ENCODE measurements at regions of chr17 and their contacts with region 1.

Region 1: DNA sequence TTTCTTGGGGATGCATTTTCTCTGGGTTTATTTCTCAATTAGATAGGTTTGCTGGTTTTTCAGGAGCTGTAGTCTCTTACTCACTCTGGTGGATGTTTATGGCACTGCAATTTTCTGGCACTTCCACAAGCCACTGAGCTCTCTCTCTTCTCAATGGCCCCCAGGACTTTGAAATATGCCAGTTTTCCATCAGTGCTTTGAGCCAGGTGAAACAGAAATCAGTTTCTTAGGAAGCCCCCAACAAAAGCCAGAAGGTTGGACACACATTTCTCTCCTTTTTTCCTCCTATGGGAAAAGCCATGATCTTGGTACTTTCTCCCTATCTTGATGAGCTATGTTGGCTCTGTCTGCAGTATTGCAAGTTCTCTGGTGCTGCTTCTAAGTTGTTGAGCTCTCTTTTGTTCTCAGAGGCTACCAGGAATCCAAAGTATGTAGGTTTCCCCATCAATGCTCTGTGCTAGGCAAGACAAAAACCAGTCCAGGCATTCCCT is 90.7 kb upstream of the SMIM36 start:
- DNase-seq: peak in 5 of 14 experiments; percentile 5 to 65 (median 54)
- ATAC-seq: peak; percentile 37
- H3K4me3 ChIP-seq: no peak overlapping the region
- H3K4me3 Mint-ChIP-seq: no peak overlapping the region
- H3K27ac ChIP-seq: no peak overlapping the region
- H3K27ac Mint-ChIP-seq: no peak overlapping the region
- H3K4me1 ChIP-seq: no peaks in the 10 kb centered on the region
- H3K4me1 Mint-ChIP-seq: no peaks in the 10 kb centered on the region
- H3K27me3 ChIP-seq: peaks cover 0 to 6% of the 10 kb centered on the region in 2 experiments
- H3K27me3 Mint-ChIP-seq: peaks cover 33% of the 10 kb centered on the region
- CTCF ChIP-seq: peak; percentile 18

Region 2: DNA sequence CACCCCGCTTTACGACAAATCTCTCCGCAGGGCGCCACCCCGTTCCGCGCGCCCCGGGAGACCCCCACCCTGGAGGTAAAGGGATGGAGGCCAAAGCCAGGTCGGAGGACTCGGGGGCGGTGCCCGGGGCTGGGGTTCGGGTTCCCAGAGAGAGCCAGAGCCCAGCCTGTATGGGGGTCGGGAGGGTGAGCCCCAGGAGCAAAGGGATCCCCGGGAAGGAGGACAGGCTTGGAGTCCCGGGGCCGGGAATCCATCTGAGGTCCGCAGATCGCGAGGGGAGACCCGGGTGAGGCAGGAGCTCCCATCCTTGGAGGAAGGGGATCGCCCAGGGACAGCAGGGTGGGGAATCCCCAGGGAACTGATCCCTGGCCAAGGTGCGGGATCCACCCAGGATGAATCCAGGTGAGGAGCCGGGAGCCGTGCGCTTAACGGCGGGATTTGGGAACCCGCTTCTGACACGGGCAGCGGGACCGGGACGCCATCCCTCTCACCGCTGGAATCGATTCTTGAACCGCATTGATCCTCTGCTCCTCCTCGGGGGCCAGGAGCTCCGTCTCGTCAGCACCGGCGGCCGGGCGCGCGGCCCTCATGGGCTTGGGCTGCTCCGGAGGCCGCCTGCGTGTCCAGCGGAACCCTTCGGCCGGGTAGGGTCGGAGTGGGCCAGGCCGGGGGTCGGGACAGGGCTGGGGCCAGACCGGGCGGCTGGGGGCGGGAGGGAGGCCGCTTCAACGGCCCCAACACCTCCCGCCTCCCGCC is 180.6 kb before region 1 on chr17 and contains the start of gene MMD:
- CTCF ChIA-PET with region 1: no interaction called
- POLR2A ChIA-PET with region 1: no interaction called
- intact Hi-C with region 1: no loop called
- DNase-seq: peak in 3 of 14 experiments; percentile 1 to 37 (median 13)
- ATAC-seq: no peak
- H3K4me3 ChIP-seq: peak within 1 kb of the TSS; percentile 99
- H3K4me3 Mint-ChIP-seq: peak within 1 kb of the TSS; percentile 95
- H3K27ac ChIP-seq: peak within 1 kb of the TSS; percentile 65
- H3K27ac Mint-ChIP-seq: peak within 1 kb of the TSS; percentile 91
- H3K4me1 ChIP-seq: peaks cover 21% of the 10 kb centered on the region
- H3K4me1 Mint-ChIP-seq: peaks cover 30% of the 10 kb centered on the region
- H3K27me3 ChIP-seq: peaks cover 6 to 7% of the 10 kb centered on the region in 2 experiments
- H3K27me3 Mint-ChIP-seq: peaks cover 32% of the 10 kb centered on the region
- CTCF ChIP-seq: no peak
- total RNA-seq, gene MMD: 15.3 to 17.4 TPM

Region 3: DNA sequence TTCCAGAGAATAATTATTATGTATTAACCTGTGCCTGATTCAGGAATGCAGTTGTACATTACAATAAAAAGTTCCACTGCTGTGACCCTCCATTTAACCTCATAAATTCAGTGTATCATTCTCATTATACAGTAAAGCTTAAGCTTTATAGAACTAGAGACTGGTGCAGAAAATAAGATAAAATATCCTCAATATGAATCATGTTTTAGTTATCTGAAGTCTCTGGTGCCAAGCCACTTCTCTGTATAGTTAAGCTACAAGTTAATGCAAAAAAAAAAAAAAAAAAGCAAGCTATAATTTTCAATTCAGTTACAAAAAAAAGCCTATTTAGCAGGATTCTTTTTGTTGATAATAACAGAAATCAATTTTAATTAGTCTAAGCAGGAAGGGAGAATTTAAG is 68.3 kb before region 1 on chr17:
- CTCF ChIA-PET with region 1: interaction called, 14 read pairs
- POLR2A ChIA-PET with region 1: no interaction called
- intact Hi-C with region 1: no loop called
- DNase-seq: no peak
- ATAC-seq: no peak
- H3K4me3 ChIP-seq: no peak overlapping the region
- H3K4me3 Mint-ChIP-seq: no peak overlapping the region
- H3K27ac ChIP-seq: no peak overlapping the region
- H3K27ac Mint-ChIP-seq: no peak overlapping the region
- H3K4me1 ChIP-seq: no peaks in the 10 kb centered on the region
- H3K4me1 Mint-ChIP-seq: no peaks in the 10 kb centered on the region
- H3K27me3 ChIP-seq: no peaks in the 10 kb centered on the region
- H3K27me3 Mint-ChIP-seq: peaks cover 4% of the 10 kb centered on the region
- CTCF ChIP-seq: no peak

Region 4: DNA sequence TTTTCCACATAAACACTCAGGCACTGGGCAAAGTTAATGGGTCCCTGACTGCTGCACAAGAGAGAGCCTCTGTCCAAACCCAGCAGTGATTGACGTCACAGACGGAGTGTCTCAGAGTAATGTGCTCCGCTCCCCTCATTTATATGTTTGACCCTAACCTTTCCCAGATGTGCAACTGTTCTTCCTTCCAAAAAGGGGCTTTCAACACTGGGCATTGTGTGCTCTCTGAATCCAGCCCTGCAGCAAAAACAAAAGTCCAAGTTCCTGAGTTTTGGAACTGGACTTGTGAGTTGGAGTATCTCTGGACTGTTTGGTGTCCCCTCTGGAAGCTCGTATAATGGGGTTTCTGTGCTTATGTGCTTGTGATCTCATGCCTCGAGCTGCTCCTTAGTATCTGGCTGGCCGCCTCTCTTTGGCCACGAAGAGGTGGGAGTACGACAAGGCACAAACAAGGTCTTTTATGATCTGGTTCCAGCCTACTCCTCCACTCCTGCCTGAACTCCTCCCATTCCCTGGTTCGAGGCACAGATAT is 14.2 kb before region 1 on chr17:
- CTCF ChIA-PET with region 1: interaction called, 14 read pairs
- POLR2A ChIA-PET with region 1: interaction called, 3 read pairs
- intact Hi-C with region 1: no loop called
- DNase-seq: no peak
- ATAC-seq: no peak
- H3K4me3 ChIP-seq: no peak overlapping the region
- H3K4me3 Mint-ChIP-seq: no peak overlapping the region
- H3K27ac ChIP-seq: no peak overlapping the region
- H3K27ac Mint-ChIP-seq: no peak overlapping the region
- H3K4me1 ChIP-seq: peaks cover 3% of the 10 kb centered on the region
- H3K4me1 Mint-ChIP-seq: no peaks in the 10 kb centered on the region
- H3K27me3 ChIP-seq: no peaks in the 10 kb centered on the region
- H3K27me3 Mint-ChIP-seq: no peaks in the 10 kb centered on the region
- CTCF ChIP-seq: no peak